OCI-LY7 (cell line): ENCODE measurements at regions of chr1 and their contacts with region 1.

Region 1: GRCh38 chr1:40385437-40386358 is 12.2 kb downstream of the SMAP2 start:
- DNase-seq: peak; percentile 91
- H3K4me3 ChIP-seq: peak overlapping the region; percentile 66
- H3K27ac ChIP-seq: peak overlapping the region; percentile 97
- H3K4me1 ChIP-seq: peaks cover 92% of the 10 kb centered on the region
- CTCF ChIP-seq: no peak

Region 2: GRCh38 chr1:40363721-40364120 is 22.0 kb before region 1 on chr1:
- CTCF ChIA-PET with region 1: interaction called, 3 read pairs
- POLR2A ChIA-PET with region 1: interaction called, 11 read pairs
- intact Hi-C with region 1: no loop called
- DNase-seq: peak; percentile 73
- H3K4me3 ChIP-seq: no peak overlapping the region
- H3K27ac ChIP-seq: no peak overlapping the region
- H3K4me1 ChIP-seq: peaks cover 13% of the 10 kb centered on the region
- CTCF ChIP-seq: peak; percentile 69

Region 3: GRCh38 chr1:40373338-40374283 is 12.1 kb before region 1 on chr1 and contains the start of gene SMAP2:
- CTCF ChIA-PET with region 1: interaction called, 13 read pairs
- POLR2A ChIA-PET with region 1: interaction called, 45 read pairs
- intact Hi-C with region 1: no loop called
- DNase-seq: peak; percentile 96
- H3K4me3 ChIP-seq: peak within 1 kb of the TSS; percentile 92
- H3K27ac ChIP-seq: peak within 1 kb of the TSS; percentile 80
- H3K4me1 ChIP-seq: peaks cover 49% of the 10 kb centered on the region
- CTCF ChIP-seq: no peak
- total RNA-seq, gene SMAP2: 50.3 and 60.5 TPM in 2 replicates

Region 4: GRCh38 chr1:40397258-40397657 is 11.6 kb after region 1 on chr1:
- CTCF ChIA-PET with region 1: interaction called, 4 read pairs
- POLR2A ChIA-PET with region 1: interaction called, 89 read pairs
- intact Hi-C with region 1: no loop called
- DNase-seq: no peak
- H3K4me3 ChIP-seq: no peak overlapping the region
- H3K27ac ChIP-seq: peak overlapping the region; percentile 68
- H3K4me1 ChIP-seq: peaks cover 84% of the 10 kb centered on the region
- CTCF ChIP-seq: 0 out of 2 replicates have a peak, but pooled peaks have one; percentile 8

Region 5: DNA sequence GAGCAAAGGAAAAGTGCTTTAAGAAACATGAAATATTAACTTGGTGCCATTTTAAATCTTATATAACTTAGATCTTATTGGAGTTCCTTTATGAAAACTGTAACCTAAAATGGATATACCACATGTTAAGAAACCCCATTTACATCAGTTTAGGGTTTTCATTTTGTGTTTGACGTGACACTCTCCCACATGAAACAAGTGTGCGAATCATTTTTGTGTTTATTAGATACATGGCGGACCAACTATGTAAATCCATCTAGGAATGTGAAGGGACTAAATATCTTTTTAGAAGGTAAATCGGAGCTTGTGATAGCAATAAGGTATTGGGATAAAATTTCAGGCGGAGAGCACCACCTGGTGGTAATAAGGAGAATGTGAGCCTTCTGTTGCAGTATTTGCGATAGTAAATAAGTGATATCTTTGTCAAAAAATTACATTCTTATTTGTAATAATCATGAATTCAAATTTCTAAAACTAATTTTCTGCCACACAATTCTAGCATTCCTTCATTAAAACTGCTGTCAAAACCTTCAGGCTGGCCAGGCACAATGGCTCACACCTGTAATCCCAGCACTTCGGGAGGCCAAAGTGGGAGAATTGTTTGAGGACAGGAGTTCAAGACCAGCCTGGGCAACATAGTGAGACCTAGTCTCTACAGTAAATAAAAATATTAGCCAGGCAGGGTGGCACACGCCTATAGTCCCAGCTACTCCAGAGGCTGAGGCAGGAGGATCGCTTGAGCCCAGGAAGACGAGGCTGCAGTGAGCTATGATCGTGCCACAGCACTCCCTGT is 19.2 kb after region 1 on chr1:
- CTCF ChIA-PET with region 1: no interaction called
- POLR2A ChIA-PET with region 1: interaction called, 5 read pairs
- intact Hi-C with region 1: loop called (anchors 1 kb)
- DNase-seq: peak; percentile 72
- H3K4me3 ChIP-seq: no peak overlapping the region
- H3K27ac ChIP-seq: peak overlapping the region; percentile 34
- H3K4me1 ChIP-seq: peaks cover 45% of the 10 kb centered on the region
- CTCF ChIP-seq: peak; percentile 99

Region 6: GRCh38 chr1:40691538-40692428 is 306.1 kb after region 1 on chr1 and contains the start of gene NFYC:
- CTCF ChIA-PET with region 1: no interaction called
- POLR2A ChIA-PET with region 1: interaction called, 4 read pairs
- intact Hi-C with region 1: loop called (anchors 10 kb)
- DNase-seq: peak; percentile 100
- H3K4me3 ChIP-seq: peak within 1 kb of the TSS; percentile 94
- H3K27ac ChIP-seq: peak within 1 kb of the TSS; percentile 87
- H3K4me1 ChIP-seq: peaks cover 52% of the 10 kb centered on the region
- CTCF ChIP-seq: no peak
- total RNA-seq, gene NFYC: 29.3 and 39.1 TPM in 2 replicates